AG04449 (cell line): ENCODE measurements at regions of chr6 and their contacts with region 1.

Region 1: GRCh38 chr6:35202066-35202546 is 11.7 kb upstream of the SCUBE3 start:
- DNase-seq: no peak
- H3K4me3 ChIP-seq: no peak overlapping the region
- CTCF ChIP-seq: no peak

Region 2: DNA sequence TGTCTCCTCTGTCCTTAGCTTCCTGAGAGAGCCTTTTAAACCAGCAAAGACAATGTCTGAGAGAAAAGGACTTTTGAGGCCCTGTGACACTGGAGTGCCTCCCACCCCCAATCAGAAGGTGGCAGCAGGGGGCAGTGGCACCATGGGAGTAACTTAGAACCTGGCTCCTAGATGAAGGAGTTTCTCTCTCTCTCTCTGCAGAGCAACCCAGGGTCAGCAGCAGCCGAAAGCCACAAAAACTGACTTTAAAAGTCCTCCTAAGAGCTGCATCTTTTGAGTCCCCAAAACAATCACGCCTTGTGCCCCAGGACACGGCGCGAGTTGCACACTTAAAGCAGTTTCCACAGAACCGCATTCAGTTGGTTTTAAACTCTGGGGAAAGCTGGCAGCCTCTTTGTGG is 55.7 kb before region 1 on chr6:
- CTCF ChIA-PET with region 1: interaction called, 179 read pairs
- POLR2A ChIA-PET with region 1: interaction called, 3 read pairs
- DNase-seq: no peak
- H3K4me3 ChIP-seq: no peak overlapping the region
- CTCF ChIP-seq: peak; percentile 84

Region 3: GRCh38 chr6:35173427-35174087 is 28.5 kb before region 1 on chr6:
- CTCF ChIA-PET with region 1: interaction called, 14 read pairs
- POLR2A ChIA-PET with region 1: interaction called, 3 read pairs
- DNase-seq: no peak
- H3K4me3 ChIP-seq: no peak overlapping the region
- CTCF ChIP-seq: no peak

Region 4: DNA sequence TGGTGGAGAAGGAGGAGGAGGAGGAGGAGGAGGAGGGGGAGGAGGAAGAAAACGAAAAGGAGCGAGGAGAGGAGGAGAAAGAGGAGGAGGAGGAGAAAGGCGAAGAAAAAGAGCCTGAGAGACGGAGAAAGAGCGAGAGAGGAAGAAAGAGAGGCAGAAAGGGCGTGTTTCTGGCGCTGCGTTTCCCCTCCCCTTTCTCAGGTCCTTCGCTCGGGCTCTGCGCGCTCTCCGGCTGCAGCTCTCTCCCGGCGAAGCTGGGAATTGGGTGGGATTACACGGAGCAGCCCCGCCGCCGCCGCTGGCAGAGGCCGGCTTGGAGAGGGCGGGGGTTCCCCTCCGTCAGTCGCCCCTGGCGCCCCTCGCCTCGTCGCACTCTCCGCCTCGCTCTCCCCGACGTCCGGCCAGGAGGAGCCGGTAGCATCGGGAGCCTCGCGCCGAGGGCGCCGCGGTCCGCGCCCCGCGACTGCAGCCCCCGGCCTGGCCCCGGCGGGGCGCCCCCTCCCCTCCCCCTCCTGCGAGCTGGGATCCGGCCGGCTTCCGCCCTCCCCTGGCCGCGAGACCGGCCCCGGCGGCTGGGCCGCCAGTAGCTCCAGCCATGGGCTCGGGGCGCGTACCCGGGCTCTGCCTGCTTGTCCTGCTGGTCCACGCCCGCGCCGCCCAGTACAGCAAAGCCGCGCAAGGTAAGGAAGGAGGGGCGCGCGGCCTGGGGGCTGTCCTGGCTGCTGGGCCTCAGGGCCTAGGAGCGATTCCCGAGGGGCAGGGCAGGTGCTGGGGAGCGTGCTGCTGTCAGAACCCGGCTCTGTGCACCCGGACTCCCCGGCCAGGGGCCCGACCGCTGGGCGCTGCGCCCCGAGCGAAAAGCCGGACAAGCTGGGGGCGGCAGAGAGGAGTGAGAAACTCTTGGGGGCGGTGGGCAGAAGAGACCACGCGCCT is 12.0 kb after region 1 on chr6 and contains the start of gene SCUBE3:
- CTCF ChIA-PET with region 1: interaction called, 171 read pairs
- POLR2A ChIA-PET with region 1: no interaction called
- DNase-seq: no peak
- H3K4me3 ChIP-seq: peak within 1 kb of the TSS; percentile 72
- CTCF ChIP-seq: no peak

Region 5: GRCh38 chr6:35230950-35231349 is 28.8 kb after region 1 on chr6:
- CTCF ChIA-PET with region 1: interaction called, 21 read pairs
- POLR2A ChIA-PET with region 1: no interaction called
- DNase-seq: no peak
- H3K4me3 ChIP-seq: no peak overlapping the region
- CTCF ChIP-seq: no peak